ENCODE measurements at regions of chr5 and their contacts with region 1.

Region 1: GRCh38 chr5:141929398-141930058 is 5.9 kb downstream of the DELE1 start:
- DNase-seq: no peak
- H3K4me3 ChIP-seq: no peak overlapping the region
- CTCF ChIP-seq: no peak

Region 2: DNA sequence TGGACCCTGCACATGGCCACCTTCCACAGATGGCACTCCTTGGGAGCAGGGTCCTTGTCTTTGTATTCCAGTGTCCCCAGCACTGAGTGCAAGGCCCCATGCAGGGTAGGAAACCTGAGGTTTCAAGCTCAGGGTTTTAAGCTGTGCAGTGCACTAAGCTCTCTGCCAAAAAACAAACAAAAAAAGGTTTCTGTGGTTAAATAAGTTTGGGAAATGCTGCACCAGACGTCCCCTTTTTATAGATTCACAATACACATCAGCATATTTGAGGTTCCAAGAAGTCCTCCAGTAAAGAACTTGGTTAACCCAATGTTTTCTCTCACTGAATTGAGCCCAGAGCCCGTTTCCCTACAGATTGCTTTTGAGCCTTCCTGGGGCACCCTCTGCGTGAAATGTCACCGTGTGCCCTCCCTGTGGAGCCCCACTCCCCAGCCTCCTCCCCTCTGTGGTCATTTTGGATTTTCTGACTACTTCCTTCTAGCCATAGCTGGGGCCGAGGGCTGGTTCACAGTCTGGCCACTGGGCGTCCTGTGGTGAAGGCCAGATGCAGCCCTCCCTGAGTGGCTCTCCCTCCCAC is 11.3 kb after region 1 on chr5:
- CTCF ChIA-PET with region 1: interaction called, 13 read pairs
- POLR2A ChIA-PET with region 1: interaction called, 3 read pairs
- DNase-seq: no peak
- H3K4me3 ChIP-seq: no peak overlapping the region
- CTCF ChIP-seq: no peak

Measured in AG04449 (cell line).